Mammary epithelial cell (primary cell): ENCODE measurements at regions of chr3 and their contacts with region 1.

Region 1: DNA sequence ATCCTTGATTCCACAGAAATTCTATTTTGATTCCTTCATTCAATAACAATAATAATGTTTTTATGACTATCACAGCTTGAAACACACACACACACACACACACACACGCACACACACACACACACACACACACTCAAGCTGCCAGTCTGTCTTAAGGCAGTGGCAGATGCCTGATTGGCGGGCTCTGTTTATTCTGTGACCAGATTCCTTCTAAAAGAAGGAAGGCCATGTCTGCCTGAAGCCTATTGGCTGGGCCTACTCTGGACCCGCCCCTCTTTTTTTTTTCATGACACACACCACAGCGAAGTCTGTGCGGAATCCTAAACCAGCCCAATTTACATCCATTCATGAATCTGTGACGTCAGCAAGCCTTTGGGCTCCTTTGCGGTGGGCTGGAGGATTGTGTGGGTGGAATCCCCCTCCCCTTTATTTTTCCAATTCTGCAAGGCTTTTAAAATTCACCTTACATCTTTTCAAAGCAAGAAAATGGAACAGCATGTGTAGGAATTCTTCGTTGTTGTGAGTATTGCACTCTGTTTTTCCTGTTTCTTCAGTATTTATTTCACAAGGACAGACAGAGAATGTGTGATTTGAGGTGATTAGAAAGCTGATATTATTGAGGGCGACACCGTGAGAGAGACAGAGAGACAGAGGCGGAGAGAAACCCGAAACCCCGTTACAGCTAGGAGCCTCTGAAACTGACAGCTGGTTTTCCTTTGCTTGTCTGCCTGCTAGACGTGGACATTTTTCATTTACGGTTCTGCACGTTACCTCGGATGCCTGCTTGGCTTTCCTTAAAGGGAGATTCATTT is at the start of gene MAP3K13:
- DNase-seq: peak; percentile 94
- H3K4me3 ChIP-seq: peak within 1 kb of the TSS; percentile 60 to 63 (median 61)
- H3K27ac ChIP-seq: peak within 1 kb of the TSS; percentile 79
- H3K4me1 ChIP-seq: peaks cover 18% of the 10 kb centered on the region
- H3K27me3 ChIP-seq: no peaks in the 10 kb centered on the region
- CTCF ChIP-seq: no peak
- total RNA-seq, gene MAP3K13: 21.5 to 28.8 TPM

Region 2: GRCh38 chr3:185406121-185406620 is 43.1 kb after region 1 on chr3:
- CTCF ChIA-PET with region 1: no interaction called
- dilution Hi-C with region 1: loop called (anchors 5 kb)
- in situ Hi-C with region 1: no loop called
- intact Hi-C with region 1: no loop called
- DNase-seq: no peak
- H3K4me3 ChIP-seq: no peak overlapping the region
- H3K27ac ChIP-seq: no peak overlapping the region
- H3K4me1 ChIP-seq: no peaks in the 10 kb centered on the region
- H3K27me3 ChIP-seq: no peaks in the 10 kb centered on the region
- CTCF ChIP-seq: no peak

Region 3: DNA sequence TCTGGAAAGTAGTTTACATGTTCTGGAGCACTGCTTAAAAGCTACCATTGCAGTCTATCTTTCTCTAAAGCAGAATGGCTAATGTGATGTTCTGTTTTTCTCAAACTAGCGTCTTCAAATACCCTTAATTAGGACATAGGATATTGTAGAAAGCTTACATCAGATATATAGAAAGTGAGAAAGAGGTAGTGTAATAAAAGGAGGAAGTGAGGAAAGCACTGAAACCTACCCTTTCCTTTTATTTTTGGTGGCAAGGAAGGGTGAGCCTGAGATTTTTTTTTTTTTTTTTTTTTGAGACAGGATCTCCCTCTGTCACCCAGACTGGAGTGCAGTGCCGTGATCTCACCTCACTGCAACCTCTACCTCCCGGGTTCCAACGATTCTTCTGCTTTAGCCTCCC is 232.5 kb after region 1 on chr3:
- CTCF ChIA-PET with region 1: no interaction called
- dilution Hi-C with region 1: no loop called
- in situ Hi-C with region 1: no loop called
- intact Hi-C with region 1: no loop called
- DNase-seq: no peak
- H3K4me3 ChIP-seq: no peak overlapping the region
- H3K27ac ChIP-seq: no peak overlapping the region
- H3K4me1 ChIP-seq: no peaks in the 10 kb centered on the region
- H3K27me3 ChIP-seq: no peaks in the 10 kb centered on the region
- CTCF ChIP-seq: no peak